Ascending aorta (tissue), 2 donors: ENCODE measurements at regions of chr11 and their contacts with region 1.

Region 1: GRCh38 chr11:126115816-126116331 is 53.2 kb upstream of the CDON start:
- DNase-seq: peak; percentile 59 to 85
- H3K4me3 ChIP-seq: no peak overlapping the region
- H3K27ac ChIP-seq: peak overlapping the region; percentile 74 to 76
- H3K4me1 ChIP-seq: peaks cover 20 to 44% of the 10 kb centered on the region in 2 donors
- H3K27me3 ChIP-seq: no peaks in the 10 kb centered on the region
- CTCF ChIP-seq: peak in 1 of 3 experiments; percentile 22

Region 2: GRCh38 chr11:124114942-124115781 is 2000.7 kb before region 1 on chr11 and contains the start of gene VWA5A:
- intact Hi-C with region 1: loop called (anchors 10 kb)
- DNase-seq: peak; percentile 44 to 92
- H3K4me3 ChIP-seq: peak within 1 kb of the TSS; percentile 49 to 72
- H3K27ac ChIP-seq: peak within 1 kb of the TSS; percentile 57 to 61
- H3K4me1 ChIP-seq: peaks cover 0 to 6% of the 10 kb centered on the region in 2 donors
- H3K27me3 ChIP-seq: no peaks in the 10 kb centered on the region
- CTCF ChIP-seq: no peak
- total RNA-seq, gene VWA5A: 7.6 TPM

Region 3: DNA sequence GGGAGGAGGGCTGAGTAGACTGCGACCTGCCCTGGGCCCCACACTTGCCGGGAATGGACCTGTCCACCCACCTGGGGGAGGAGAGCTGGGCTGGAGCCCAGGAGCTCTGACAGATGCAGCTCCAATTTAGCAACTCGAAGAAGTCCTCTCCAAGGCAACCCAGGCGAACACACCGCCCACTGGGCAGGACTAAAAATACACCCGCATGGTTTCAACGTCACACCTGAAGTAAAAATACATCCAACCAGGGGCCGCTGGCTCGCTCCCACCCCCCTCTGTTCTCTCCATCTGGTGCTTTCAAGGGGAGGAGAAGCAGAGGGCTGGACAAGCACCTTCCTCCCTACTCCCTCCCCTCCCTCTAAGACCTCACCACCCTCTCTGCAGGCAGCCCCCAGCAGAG is 739.8 kb before region 1 on chr11:
- intact Hi-C with region 1: loop called (anchors 5 kb)
- DNase-seq: peak; percentile 84 to 93
- H3K4me3 ChIP-seq: peak overlapping the region in 1 of 2 donors; percentile 30
- H3K27ac ChIP-seq: peak overlapping the region; percentile 62 to 68
- H3K4me1 ChIP-seq: peaks cover 4 to 32% of the 10 kb centered on the region in 2 donors
- H3K27me3 ChIP-seq: no peaks in the 10 kb centered on the region
- CTCF ChIP-seq: no peak

Region 4: GRCh38 chr11:126048198-126048597 is 67.7 kb before region 1 on chr11:
- intact Hi-C with region 1: no loop called
- DNase-seq: no peak
- H3K4me3 ChIP-seq: no peak overlapping the region
- H3K27ac ChIP-seq: no peak overlapping the region
- H3K4me1 ChIP-seq: no peaks in the 10 kb centered on the region
- H3K27me3 ChIP-seq: no peaks in the 10 kb centered on the region
- CTCF ChIP-seq: no peak

Region 5: DNA sequence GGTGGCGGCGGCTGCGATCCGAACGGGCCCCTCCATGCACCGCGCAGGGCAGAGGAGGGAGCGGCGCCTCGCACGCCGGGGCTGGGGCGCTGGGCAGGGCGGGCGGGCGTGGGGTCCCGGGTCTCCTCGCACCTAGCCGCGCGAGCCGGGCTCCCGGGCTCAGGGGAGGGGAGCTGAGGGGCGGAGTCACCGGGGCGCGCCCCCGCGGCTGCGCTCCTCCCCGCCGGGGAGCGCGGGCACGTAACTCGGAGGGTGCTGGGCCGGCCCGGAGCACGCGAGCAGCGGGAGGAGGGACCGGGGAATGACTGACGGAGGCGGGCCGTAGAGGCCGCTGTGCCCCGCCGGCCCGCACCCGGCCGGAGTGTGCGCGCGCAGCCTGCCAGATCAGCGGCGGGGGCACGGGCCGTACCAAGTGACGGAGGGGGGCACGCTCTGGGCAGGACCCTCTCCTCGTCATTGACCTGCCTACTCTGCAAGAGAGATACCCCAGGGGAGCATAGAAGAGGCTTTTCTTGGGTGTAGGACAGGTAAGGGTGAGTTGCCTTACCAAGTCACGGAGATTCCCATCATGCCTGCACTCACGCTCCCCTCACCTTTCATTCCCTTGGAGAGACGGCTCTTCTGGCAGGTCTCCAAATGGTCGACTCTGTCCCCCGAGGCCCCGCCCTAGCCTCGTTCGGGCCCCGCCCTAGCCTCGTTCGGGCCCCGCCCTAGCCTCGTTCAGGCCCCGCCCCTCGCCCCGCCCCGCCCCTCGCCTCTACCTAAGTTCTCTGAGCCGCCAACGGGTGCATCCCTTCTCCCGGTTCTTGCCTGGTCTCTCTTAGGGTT is 53.0 kb before region 1 on chr11 and contains the start of gene CDON:
- intact Hi-C with region 1: loop called (anchors 1 kb)
- DNase-seq: peak; percentile 43 to 93
- H3K4me3 ChIP-seq: peak within 1 kb of the TSS; percentile 78 to 89
- H3K27ac ChIP-seq: peak within 1 kb of the TSS; percentile 64 to 68
- H3K4me1 ChIP-seq: peaks cover 0 to 8% of the 10 kb centered on the region in 2 donors
- H3K27me3 ChIP-seq: no peaks in the 10 kb centered on the region
- CTCF ChIP-seq: peak in 1 of 3 experiments; percentile 12
- total RNA-seq, gene CDON: 33.0 TPM

Region 6: DNA sequence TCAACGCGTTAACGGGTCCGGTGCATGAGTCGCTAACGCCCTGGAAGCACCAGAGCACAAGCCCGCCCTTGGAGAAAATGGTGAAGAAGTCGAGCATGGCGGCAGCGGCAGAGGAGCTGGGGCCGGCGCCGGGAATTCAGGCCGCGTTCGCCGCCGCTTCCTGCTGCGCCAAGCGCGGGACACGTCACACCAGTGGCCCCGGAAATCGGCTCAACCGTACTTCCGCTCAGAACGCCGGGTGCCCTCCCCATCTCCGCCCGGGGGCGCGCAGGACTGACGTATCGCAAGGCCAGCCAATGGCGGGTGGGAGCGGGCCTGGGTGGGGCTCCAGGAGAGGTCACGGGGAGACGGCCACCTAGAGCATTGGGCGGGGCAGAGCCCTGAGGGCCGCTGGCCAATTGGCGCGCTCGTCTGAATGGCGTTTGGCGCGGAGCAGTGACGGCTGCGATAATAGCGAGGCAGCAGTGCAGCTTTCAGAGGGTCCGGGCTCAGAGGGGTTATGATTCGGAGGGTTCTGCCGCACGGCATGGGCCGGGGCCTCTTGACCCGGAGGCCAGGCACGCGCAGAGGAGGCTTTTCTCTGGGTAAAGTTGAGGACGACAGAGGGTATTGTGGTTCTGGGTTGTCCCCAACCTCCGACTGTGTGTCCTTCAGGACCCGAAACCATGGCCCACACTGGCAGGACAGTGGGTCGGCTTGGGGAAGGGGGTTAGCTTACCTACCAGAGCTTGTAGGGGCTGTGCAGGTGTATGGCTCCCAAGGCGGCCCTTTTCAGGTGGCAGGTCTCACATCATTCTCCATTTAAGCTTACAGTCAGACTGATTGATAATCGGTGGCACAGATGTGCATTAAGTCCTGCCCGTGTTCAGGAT is 153.1 kb after region 1 on chr11 and contains the starts of genes FOXRED1 and SRPRA:
- intact Hi-C with region 1: loop called (anchors 1 kb)
- DNase-seq: peak; percentile 97 to 100
- H3K4me3 ChIP-seq: peak within 1 kb of the TSS; percentile 81 to 93
- H3K27ac ChIP-seq: peak within 1 kb of the TSS; percentile 90 to 91
- H3K4me1 ChIP-seq: peaks cover 0 to 13% of the 10 kb centered on the region in 2 donors
- H3K27me3 ChIP-seq: no peaks in the 10 kb centered on the region
- CTCF ChIP-seq: no peak
- total RNA-seq, gene FOXRED1: 1.8 TPM
- total RNA-seq, gene SRPRA: 49.7 TPM

Region 7: GRCh38 chr11:126480410-126481302 is 364.8 kb after region 1 on chr11:
- intact Hi-C with region 1: no loop called
- DNase-seq: peak; percentile 24 to 91
- H3K4me3 ChIP-seq: peak overlapping the region in 1 of 2 donors; percentile 52
- H3K27ac ChIP-seq: peak overlapping the region; percentile 69 to 73
- H3K4me1 ChIP-seq: no peaks in the 10 kb centered on the region
- H3K27me3 ChIP-seq: no peaks in the 10 kb centered on the region
- CTCF ChIP-seq: peak; percentile 89 to 92 (median 91)